ENCODE measurements at regions of chr3 and their contacts with region 1.

Region 1: DNA sequence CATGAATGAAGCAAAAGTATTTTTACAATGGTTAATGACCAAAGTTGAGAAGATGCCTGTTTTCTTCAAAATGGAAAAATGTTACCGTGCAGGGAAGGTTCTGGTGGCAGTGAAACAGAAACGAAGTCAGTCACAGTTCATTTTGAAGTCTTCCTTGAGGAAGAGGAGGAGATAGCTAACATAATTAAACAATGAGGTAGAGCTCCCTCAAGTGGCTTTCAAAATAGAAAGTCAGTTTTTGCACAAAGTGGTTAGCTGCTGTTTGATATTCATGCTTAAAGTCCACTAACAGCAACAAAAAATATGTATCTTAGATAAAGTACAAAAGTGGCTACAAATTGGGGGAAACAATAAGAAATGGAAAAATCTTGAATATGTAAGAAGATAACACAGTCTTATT is 87.3 kb downstream of the TFG start:
- DNase-seq: peak; percentile 19
- H3K4me3 ChIP-seq: no peak overlapping the region
- H3K27ac ChIP-seq: no peak overlapping the region
- H3K4me1 ChIP-seq: peaks cover 8% of the 10 kb centered on the region
- H3K27me3 ChIP-seq: no peaks in the 10 kb centered on the region
- CTCF ChIP-seq: peak; percentile 30 to 45

Region 2: GRCh38 chr3:100603469-100603868 is 193.1 kb before region 1 on chr3:
- CTCF ChIA-PET with region 1: interaction called, 5 read pairs
- dilution Hi-C with region 1: no loop called
- in situ Hi-C with region 1: no loop called
- intact Hi-C with region 1: loop called (anchors 1 kb)
- DNase-seq: peak; percentile 73
- H3K4me3 ChIP-seq: no peak overlapping the region
- H3K27ac ChIP-seq: peak overlapping the region; percentile 91
- H3K4me1 ChIP-seq: peaks cover 43% of the 10 kb centered on the region
- H3K27me3 ChIP-seq: no peaks in the 10 kb centered on the region
- CTCF ChIP-seq: peak; percentile 71 to 77

Region 3: GRCh38 chr3:100650651-100651611 is 145.6 kb before region 1 on chr3:
- CTCF ChIA-PET with region 1: no interaction called
- dilution Hi-C with region 1: no loop called
- in situ Hi-C with region 1: no loop called
- intact Hi-C with region 1: loop called (anchors 5 kb)
- DNase-seq: peak; percentile 72
- H3K4me3 ChIP-seq: peak overlapping the region in 1 of 3 experiments; percentile 13
- H3K27ac ChIP-seq: peak overlapping the region; percentile 36
- H3K4me1 ChIP-seq: peaks cover 3% of the 10 kb centered on the region
- H3K27me3 ChIP-seq: no peaks in the 10 kb centered on the region
- CTCF ChIP-seq: peak in 1 of 2 donors; percentile 38

Region 4: DNA sequence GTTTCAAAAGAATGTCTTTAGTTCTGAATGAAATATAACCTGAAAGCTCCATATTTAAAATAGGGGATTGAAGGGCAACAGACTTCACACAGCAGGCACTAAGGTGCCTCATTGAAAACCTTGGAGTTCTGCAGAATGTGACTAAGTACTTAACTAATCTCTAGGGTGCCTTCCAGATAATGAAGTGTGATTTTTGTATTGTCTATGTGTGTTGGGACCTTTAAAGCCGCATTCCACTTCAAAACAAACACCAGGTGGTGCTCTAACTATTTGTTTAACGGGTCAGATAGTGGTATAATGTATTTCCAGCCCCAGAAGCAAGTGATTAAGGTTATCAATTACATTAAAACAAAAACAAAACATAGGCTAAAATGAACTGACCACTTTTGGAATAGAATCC is 59.2 kb before region 1 on chr3:
- CTCF ChIA-PET with region 1: no interaction called
- dilution Hi-C with region 1: no loop called
- in situ Hi-C with region 1: no loop called
- intact Hi-C with region 1: loop called (anchors 2 kb)
- DNase-seq: peak; percentile 25
- H3K4me3 ChIP-seq: no peak overlapping the region
- H3K27ac ChIP-seq: no peak overlapping the region
- H3K4me1 ChIP-seq: no peaks in the 10 kb centered on the region
- H3K27me3 ChIP-seq: no peaks in the 10 kb centered on the region
- CTCF ChIP-seq: peak; percentile 19 to 42

Region 5: GRCh38 chr3:100761211-100761942 is 35.2 kb before region 1 on chr3:
- CTCF ChIA-PET with region 1: no interaction called
- dilution Hi-C with region 1: no loop called
- in situ Hi-C with region 1: no loop called
- intact Hi-C with region 1: loop called (anchors 5 kb)
- DNase-seq: no peak
- H3K4me3 ChIP-seq: no peak overlapping the region
- H3K27ac ChIP-seq: no peak overlapping the region
- H3K4me1 ChIP-seq: peaks cover 8% of the 10 kb centered on the region
- H3K27me3 ChIP-seq: no peaks in the 10 kb centered on the region
- CTCF ChIP-seq: peak; percentile 39 to 47